ENCODE measurements at regions of chr4 and their contacts with region 1.

Region 1: GRCh38 chr4:3729188-3729875 is 36.9 kb upstream of the ADRA2C start:
- DNase-seq: no peak
- ATAC-seq: no peak
- H3K4me3 Mint-ChIP-seq: no peak overlapping the region
- H3K27ac Mint-ChIP-seq: no peak overlapping the region
- H3K4me1 Mint-ChIP-seq: peaks cover 27% of the 10 kb centered on the region
- H3K27me3 Mint-ChIP-seq: peaks cover 28% of the 10 kb centered on the region
- CTCF ChIP-seq: no peak

Region 2: DNA sequence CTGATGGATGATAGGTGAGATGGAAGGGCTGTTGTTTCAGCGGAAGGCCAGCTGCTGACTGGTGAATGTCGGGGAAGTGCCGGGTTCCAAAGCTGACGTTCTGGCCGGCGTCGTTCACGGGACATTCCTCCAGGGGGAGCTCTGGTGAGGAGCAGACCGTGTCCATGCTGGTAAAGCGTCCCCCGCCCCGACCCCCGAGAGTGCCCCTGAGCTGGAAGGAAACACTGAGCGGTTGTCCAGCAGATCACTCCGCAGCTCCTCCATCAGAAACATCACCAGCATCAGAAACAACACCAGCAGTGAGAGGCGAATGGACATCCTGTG is 18.2 kb after region 1 on chr4:
- CTCF ChIA-PET with region 1: interaction called, 19 read pairs
- POLR2A ChIA-PET with region 1: no interaction called
- DNase-seq: peak; percentile 87
- ATAC-seq: peak; percentile 78
- H3K4me3 Mint-ChIP-seq: no peak overlapping the region
- H3K27ac Mint-ChIP-seq: no peak overlapping the region
- H3K4me1 Mint-ChIP-seq: peaks cover 36% of the 10 kb centered on the region
- H3K27me3 Mint-ChIP-seq: peaks cover 13% of the 10 kb centered on the region
- CTCF ChIP-seq: peak; percentile 37; the same call in 1 of the 2 replicates

Measured in WTC11 (cell line).